ENCODE measurements at regions of chr9 and their contacts with region 1.

Region 1: GRCh38 chr9:96875461-96876364 is 21.4 kb upstream of the ZNF782 start:
- DNase-seq: peak; percentile 87
- H3K4me3 Mint-ChIP-seq: peak overlapping the region; percentile 92
- H3K27ac Mint-ChIP-seq: peak overlapping the region; percentile 99
- H3K4me1 Mint-ChIP-seq: peaks cover 24% of the 10 kb centered on the region
- H3K27me3 Mint-ChIP-seq: no peaks in the 10 kb centered on the region
- CTCF ChIP-seq: peak; percentile 21

Region 2: GRCh38 chr9:96818535-96818934 is 57.2 kb before region 1 on chr9:
- CTCF ChIA-PET with region 1: no interaction called
- POLR2A ChIA-PET with region 1: no interaction called
- intact Hi-C with region 1: no loop called
- DNase-seq: peak; percentile 3
- H3K4me3 Mint-ChIP-seq: no peak overlapping the region
- H3K27ac Mint-ChIP-seq: no peak overlapping the region
- H3K4me1 Mint-ChIP-seq: no peaks in the 10 kb centered on the region
- H3K27me3 Mint-ChIP-seq: no peaks in the 10 kb centered on the region
- CTCF ChIP-seq: no peak

Region 3: GRCh38 chr9:96859461-96860198 is 16.1 kb before region 1 on chr9:
- CTCF ChIA-PET with region 1: interaction called, 81 read pairs
- POLR2A ChIA-PET with region 1: interaction called, 124 read pairs
- intact Hi-C with region 1: loop called (anchors 2 kb)
- DNase-seq: peak; percentile 93
- H3K4me3 Mint-ChIP-seq: no peak overlapping the region
- H3K27ac Mint-ChIP-seq: peak overlapping the region; percentile 86
- H3K4me1 Mint-ChIP-seq: peaks cover 27% of the 10 kb centered on the region
- H3K27me3 Mint-ChIP-seq: no peaks in the 10 kb centered on the region
- CTCF ChIP-seq: no peak

Region 4: GRCh38 chr9:97237951-97238851 is 362.5 kb after region 1 on chr9:
- CTCF ChIA-PET with region 1: no interaction called
- POLR2A ChIA-PET with region 1: interaction called, 14 read pairs
- intact Hi-C with region 1: no loop called
- DNase-seq: peak; percentile 84
- H3K4me3 Mint-ChIP-seq: peak overlapping the region; percentile 92
- H3K27ac Mint-ChIP-seq: peak overlapping the region; percentile 91
- H3K4me1 Mint-ChIP-seq: peaks cover 12% of the 10 kb centered on the region
- H3K27me3 Mint-ChIP-seq: no peaks in the 10 kb centered on the region
- CTCF ChIP-seq: no peak

Region 5: GRCh38 chr9:97954550-97954989 is 1078.9 kb after region 1 on chr9:
- CTCF ChIA-PET with region 1: no interaction called
- POLR2A ChIA-PET with region 1: no interaction called
- intact Hi-C with region 1: no loop called
- DNase-seq: peak; percentile 64
- H3K4me3 Mint-ChIP-seq: no peak overlapping the region
- H3K27ac Mint-ChIP-seq: no peak overlapping the region
- H3K4me1 Mint-ChIP-seq: no peaks in the 10 kb centered on the region
- H3K27me3 Mint-ChIP-seq: peaks cover 13% of the 10 kb centered on the region
- CTCF ChIP-seq: peak; percentile 69